SK-N-SH (cell line): ENCODE measurements at regions of chr1 and their contacts with region 1.

Region 1: DNA sequence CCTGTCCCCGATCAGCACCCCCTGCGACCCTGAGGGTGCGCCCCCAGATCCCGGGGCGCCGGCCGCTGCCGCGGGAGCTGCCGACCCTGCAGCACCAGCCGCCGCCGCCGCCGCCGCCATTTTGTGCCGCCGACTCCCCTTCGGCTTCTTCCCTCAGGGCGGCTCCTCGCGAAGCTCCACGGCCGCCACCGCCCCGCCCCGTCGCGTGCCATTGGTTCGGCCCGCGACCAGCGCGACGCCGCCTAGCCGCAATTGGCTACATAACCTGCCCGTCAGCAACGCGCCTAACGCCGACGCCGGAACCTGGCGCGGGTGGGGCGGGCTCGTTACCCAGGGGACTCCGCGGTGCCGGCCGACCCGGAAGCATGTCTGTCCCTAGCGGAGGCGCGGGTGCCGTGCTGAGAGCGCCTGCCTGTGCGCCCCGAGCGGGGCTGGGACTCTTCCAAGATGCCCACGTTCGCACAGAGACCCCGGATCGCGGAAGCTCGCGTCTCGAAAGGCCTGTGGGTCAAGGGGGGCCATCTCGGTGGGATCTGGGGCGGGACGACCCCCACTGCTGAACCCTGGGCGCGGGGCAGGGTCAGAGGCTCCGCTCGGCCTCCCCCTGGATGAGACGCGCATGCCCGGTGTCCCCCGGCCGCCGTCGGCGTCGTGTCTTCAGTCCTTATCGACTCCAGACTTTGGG is at the start of gene CCNL2:
- DNase-seq: peak; percentile 99
- H3K4me3 ChIP-seq: peak within 1 kb of the TSS; percentile 74 to 78
- H3K27ac ChIP-seq: peak within 1 kb of the TSS; percentile 72 to 85
- H3K4me1 ChIP-seq: peaks cover 6 to 23% of the 10 kb centered on the region in 2 experiments; a peak in 1 of 4 replicates
- H3K27me3 ChIP-seq: no peaks in the 10 kb centered on the region
- CTCF ChIP-seq: peak; percentile 53
- EP300 ChIP-seq: peak in 1 of 2 experiments; percentile 20; a peak in 1 of 4 replicates
- RAD21 ChIP-seq: no peak
- polyA plus RNA-seq, gene CCNL2: 362 and 475 TPM in 2 replicates

Region 2: DNA sequence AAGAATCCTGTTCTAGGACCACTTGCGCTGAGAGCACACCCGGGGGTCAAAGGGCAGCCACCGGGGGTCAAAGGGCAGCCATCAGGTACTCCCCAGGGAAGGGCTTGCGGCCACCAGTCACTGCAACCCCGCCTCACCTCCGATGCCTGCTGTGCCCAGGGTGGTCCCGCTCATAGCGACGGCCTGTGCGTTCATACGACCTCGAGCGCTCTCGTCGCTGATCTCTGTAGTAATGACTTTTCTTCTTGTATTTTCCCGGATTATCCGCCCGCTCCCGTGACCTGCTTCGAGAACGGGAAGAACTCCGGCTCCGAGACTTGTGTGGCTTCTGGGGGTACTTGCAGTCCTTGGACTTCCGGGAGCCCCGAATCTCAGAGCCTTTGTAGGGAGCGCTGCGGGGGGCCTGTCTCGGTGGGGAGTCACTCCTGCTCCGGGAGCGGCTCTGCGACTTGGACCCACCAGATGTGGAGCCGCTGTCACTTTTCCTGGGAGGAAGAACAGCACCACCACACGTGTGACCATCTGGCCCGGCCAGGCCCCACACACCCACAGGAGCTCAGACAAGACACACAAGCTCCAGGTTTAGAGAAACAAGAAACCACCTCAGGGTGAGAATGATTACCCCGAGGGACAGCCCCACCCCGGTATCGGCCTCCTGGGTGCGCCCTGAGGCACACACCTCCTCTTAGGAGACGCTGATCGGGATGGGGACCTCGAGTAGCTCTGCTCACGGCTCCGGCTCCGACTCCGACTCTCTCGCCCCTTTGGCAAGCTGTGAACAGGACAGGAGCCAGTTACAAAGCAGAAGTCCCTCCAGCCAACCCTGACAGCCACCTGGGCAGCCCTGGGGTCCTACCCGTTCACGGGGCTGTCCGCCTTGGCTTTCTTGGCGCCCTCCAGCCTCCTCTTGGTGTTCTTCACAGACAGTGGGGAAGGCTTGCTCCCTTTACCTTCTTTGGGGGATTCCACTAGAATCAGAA is 11.9 kb before region 1 on chr1:
- CTCF ChIA-PET with region 1: interaction called, 16 read pairs
- POLR2A ChIA-PET with region 1: interaction called, 10 read pairs
- DNase-seq: no peak
- H3K4me3 ChIP-seq: no peak overlapping the region
- H3K27ac ChIP-seq: no peak overlapping the region
- H3K4me1 ChIP-seq: no peaks in the 10 kb centered on the region
- H3K27me3 ChIP-seq: no peaks in the 10 kb centered on the region
- CTCF ChIP-seq: no peak
- EP300 ChIP-seq: no peak
- RAD21 ChIP-seq: no peak

Region 3: GRCh38 chr1:1479547-1480487 is 80.5 kb after region 1 on chr1:
- CTCF ChIA-PET with region 1: no interaction called
- POLR2A ChIA-PET with region 1: no interaction called
- DNase-seq: peak; percentile 29
- H3K4me3 ChIP-seq: no peak overlapping the region
- H3K27ac ChIP-seq: no peak overlapping the region
- H3K4me1 ChIP-seq: no peaks in the 10 kb centered on the region
- H3K27me3 ChIP-seq: no peaks in the 10 kb centered on the region
- CTCF ChIP-seq: no peak
- EP300 ChIP-seq: no peak
- RAD21 ChIP-seq: no peak